Activated T-helper 1 cell treated with anti-CD3 and anti-CD28 coated beads, Interleukin-12 subunit alpha, Interleukin-12 subunit beta, Interleukin-2, Interleukin-4 antibody, amounts not matched to agents 30 ng/mL and 10 ng/mL and 1 ng/mL, durations not matched to agents 14 hours and 24 hours and 36 hours (primary cell): ENCODE measurements at regions of chr2 and their contacts with region 1.

Region 1: GRCh38 chr2:32627814-32628579 is at the start of gene TTC27:
- DNase-seq: peak; percentile 93
- H3K4me3 Mint-ChIP-seq: peak within 1 kb of the TSS; percentile 94
- H3K27ac Mint-ChIP-seq: peak within 1 kb of the TSS; percentile 91
- H3K4me1 Mint-ChIP-seq: peaks cover 26% of the 10 kb centered on the region
- H3K27me3 Mint-ChIP-seq: no peaks in the 10 kb centered on the region
- total RNA-seq, gene TTC27: 41.3 and 42.3 TPM in 2 replicates

Region 2: GRCh38 chr2:32039447-32040219 is 588.4 kb before region 1 on chr2 and contains the start of gene DPY30:
- intact Hi-C with region 1: loop called (anchors 1 kb)
- DNase-seq: peak; percentile 86
- H3K4me3 Mint-ChIP-seq: peak within 1 kb of the TSS; percentile 93
- H3K27ac Mint-ChIP-seq: peak within 1 kb of the TSS; percentile 93
- H3K4me1 Mint-ChIP-seq: peaks cover 17% of the 10 kb centered on the region
- H3K27me3 Mint-ChIP-seq: peaks cover 1% of the 10 kb centered on the region
- total RNA-seq, gene DPY30: 64.6 and 72.5 TPM in 2 replicates

Region 3: GRCh38 chr2:32277674-32278482 is 350.1 kb before region 1 on chr2 and contains the start of gene YIPF4:
- intact Hi-C with region 1: loop called (anchors 10 kb)
- DNase-seq: peak; percentile 84
- H3K4me3 Mint-ChIP-seq: peak within 1 kb of the TSS; percentile 89
- H3K27ac Mint-ChIP-seq: peak within 1 kb of the TSS; percentile 85
- H3K4me1 Mint-ChIP-seq: peaks cover 13% of the 10 kb centered on the region
- H3K27me3 Mint-ChIP-seq: peaks cover 4% of the 10 kb centered on the region
- total RNA-seq, gene YIPF4: 39.4 and 42.9 TPM in 2 replicates

Region 4: DNA sequence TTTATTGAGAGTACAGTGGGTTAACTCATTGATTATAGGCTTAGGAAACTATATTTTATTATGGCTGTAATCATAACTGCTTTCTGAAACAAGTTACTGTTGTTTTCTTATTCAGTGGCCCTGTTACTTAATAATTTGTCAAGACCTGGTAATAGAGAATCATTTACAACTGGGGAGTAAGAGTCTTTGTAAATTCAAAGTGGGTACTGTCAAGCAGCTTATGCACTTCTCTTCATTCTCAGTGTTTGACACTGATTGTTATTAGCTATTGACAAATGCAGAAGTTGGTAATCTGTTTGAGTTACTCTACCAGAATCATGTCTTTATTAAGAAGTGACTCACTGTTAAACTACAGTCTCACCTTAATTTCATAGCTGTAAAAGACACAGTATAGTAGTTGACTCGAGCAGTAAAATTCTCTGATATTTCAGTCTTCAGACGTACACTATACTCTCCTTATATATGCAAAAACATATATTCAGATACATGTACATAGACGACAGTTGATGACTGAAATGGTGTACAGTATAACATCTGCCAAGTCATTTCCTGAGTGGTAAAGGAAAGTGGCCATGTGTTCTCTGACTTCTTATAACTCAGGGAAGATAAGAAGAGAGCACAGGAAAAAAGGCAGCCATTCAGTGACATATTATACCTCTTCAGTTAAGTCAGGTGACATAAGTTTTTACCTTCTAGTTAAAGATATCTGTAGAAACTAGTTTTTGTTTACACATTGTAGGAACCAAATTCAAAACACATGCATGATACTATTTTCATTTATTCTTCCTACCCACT is 36.1 kb before region 1 on chr2:
- intact Hi-C with region 1: loop called (anchors 1 kb)
- DNase-seq: peak; percentile 5
- H3K4me3 Mint-ChIP-seq: peak overlapping the region; percentile 70
- H3K27ac Mint-ChIP-seq: peak overlapping the region; percentile 93
- H3K4me1 Mint-ChIP-seq: peaks cover 37% of the 10 kb centered on the region
- H3K27me3 Mint-ChIP-seq: no peaks in the 10 kb centered on the region

Region 5: GRCh38 chr2:33321236-33321771 is 693.3 kb after region 1 on chr2:
- intact Hi-C with region 1: loop called (anchors 5 kb)
- DNase-seq: peak; percentile 11
- H3K4me3 Mint-ChIP-seq: peak overlapping the region; percentile 41
- H3K27ac Mint-ChIP-seq: peak overlapping the region; percentile 75
- H3K4me1 Mint-ChIP-seq: peaks cover 25% of the 10 kb centered on the region
- H3K27me3 Mint-ChIP-seq: peaks cover 3% of the 10 kb centered on the region

Region 6: DNA sequence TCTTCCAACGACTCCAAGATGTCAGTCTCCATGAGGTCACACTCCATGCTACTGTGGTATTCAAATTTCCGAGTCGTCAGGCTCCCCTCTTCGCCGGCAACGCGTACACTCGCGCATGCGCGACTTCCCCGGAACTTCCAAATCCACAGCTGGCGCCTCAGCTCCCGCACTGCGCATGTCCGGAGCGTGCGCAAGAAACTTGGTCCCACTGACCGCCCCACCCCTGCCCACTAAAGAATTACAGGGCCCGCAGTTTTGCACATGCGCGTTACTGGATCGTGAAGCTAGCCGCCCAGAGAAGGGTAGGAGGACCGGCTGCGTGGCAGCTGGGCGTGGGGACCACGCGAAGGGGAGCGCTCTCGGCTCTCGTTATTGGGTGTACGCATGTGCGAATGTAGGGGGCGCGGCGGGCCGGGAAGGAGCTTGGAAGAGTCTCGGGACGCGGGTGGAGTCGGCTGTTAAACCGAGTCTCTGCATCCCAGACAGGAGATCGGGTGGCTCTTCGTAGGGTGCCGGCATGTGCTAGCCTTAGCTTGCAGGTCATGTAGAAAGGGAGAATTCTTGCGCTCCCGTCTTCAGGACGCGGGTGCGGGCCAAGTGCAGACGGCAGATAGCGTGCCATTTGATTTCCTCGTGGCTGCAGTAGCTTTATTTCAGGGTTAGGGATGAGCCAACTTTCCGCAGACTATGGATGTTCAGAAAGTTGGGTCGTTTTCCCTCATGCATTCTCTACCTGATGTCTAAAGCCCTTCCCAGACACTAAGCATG is 971.4 kb after region 1 on chr2 and contains the start of gene FAM98A:
- intact Hi-C with region 1: loop called (anchors 1 kb)
- DNase-seq: peak; percentile 98
- H3K4me3 Mint-ChIP-seq: peak within 1 kb of the TSS; percentile 90
- H3K27ac Mint-ChIP-seq: peak within 1 kb of the TSS; percentile 94
- H3K4me1 Mint-ChIP-seq: peaks cover 35% of the 10 kb centered on the region
- H3K27me3 Mint-ChIP-seq: no peaks in the 10 kb centered on the region
- total RNA-seq, gene FAM98A: 58.1 and 59.8 TPM in 2 replicates